ENCODE measurements at regions of chr18 and their contacts with region 1.

Region 1: GRCh38 chr18:38575648-38576047 is 1010.0 kb upstream of the CELF4 start:
- DNase-seq: peak; percentile 34
- H3K4me3 Mint-ChIP-seq: no peak overlapping the region
- H3K27ac Mint-ChIP-seq: peak overlapping the region; percentile 77
- H3K4me1 Mint-ChIP-seq: peaks cover 32% of the 10 kb centered on the region
- H3K27me3 Mint-ChIP-seq: no peaks in the 10 kb centered on the region

Region 2: GRCh38 chr18:38563396-38563980 is 12.2 kb before region 1 on chr18:
- CTCF ChIA-PET with region 1: interaction called, 3 read pairs
- intact Hi-C with region 1: loop called (anchors 1 kb)
- DNase-seq: peak; percentile 41
- H3K4me3 Mint-ChIP-seq: no peak overlapping the region
- H3K27ac Mint-ChIP-seq: no peak overlapping the region
- H3K4me1 Mint-ChIP-seq: peaks cover 15% of the 10 kb centered on the region
- H3K27me3 Mint-ChIP-seq: no peaks in the 10 kb centered on the region

Region 3: GRCh38 chr18:38644875-38645641 is 69.4 kb after region 1 on chr18:
- CTCF ChIA-PET with region 1: no interaction called
- intact Hi-C with region 1: loop called (anchors 2 kb)
- DNase-seq: peak; percentile 14
- H3K4me3 Mint-ChIP-seq: no peak overlapping the region
- H3K27ac Mint-ChIP-seq: no peak overlapping the region
- H3K4me1 Mint-ChIP-seq: peaks cover 6% of the 10 kb centered on the region
- H3K27me3 Mint-ChIP-seq: peaks cover 2% of the 10 kb centered on the region

Region 4: GRCh38 chr18:38940863-38941531 is 365.3 kb after region 1 on chr18:
- CTCF ChIA-PET with region 1: no interaction called
- intact Hi-C with region 1: loop called (anchors 1 kb)
- DNase-seq: peak; percentile 69
- H3K4me3 Mint-ChIP-seq: peak overlapping the region; percentile 41
- H3K27ac Mint-ChIP-seq: peak overlapping the region; percentile 97
- H3K4me1 Mint-ChIP-seq: peaks cover 38% of the 10 kb centered on the region
- H3K27me3 Mint-ChIP-seq: no peaks in the 10 kb centered on the region

Measured in activated naive CD4-positive, alpha-beta T cell treated with anti-CD3 and anti-CD28 coated beads for 36 hours (primary cell).